CD4-positive, alpha-beta memory T cell (primary cell): ENCODE measurements at regions of chr14 and their contacts with region 1.

Region 1: DNA sequence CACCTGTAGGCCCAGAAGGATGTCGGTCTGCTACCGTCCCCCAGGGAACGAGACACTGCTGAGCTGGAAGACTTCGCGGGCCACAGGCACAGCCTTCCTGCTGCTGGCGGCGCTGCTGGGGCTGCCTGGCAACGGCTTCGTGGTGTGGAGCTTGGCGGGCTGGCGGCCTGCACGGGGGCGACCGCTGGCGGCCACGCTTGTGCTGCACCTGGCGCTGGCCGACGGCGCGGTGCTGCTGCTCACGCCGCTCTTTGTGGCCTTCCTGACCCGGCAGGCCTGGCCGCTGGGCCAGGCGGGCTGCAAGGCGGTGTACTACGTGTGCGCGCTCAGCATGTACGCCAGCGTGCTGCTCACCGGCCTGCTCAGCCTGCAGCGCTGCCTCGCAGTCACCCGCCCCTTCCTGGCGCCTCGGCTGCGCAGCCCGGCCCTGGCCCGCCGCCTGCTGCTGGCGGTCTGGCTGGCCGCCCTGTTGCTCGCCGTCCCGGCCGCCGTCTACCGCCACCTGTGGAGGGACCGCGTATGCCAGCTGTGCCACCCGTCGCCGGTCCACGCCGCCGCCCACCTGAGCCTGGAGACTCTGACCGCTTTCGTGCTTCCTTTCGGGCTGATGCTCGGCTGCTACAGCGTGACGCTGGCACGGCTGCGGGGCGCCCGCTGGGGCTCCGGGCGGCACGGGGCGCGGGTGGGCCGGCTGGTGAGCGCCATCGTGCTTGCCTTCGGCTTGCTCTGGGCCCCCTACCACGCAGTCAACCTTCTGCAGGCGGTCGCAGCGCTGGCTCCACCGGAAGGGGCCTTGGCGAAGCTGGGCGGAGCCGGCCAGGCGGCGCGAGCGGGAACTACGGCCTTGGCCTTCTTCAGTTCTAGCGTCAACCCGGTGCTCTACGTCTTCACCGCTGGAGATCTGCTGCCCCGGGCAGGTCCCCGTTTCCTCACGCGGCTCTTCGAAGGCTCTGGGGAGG is at the start of gene LTB4R:
- DNase-seq: peak; percentile 73 to 79 (median 77)
- H3K4me3 ChIP-seq: peak within 1 kb of the TSS; percentile 55 to 58
- H3K4me3 Mint-ChIP-seq: peak within 1 kb of the TSS; percentile 83 to 94 (median 88)
- H3K27ac ChIP-seq: peak within 1 kb of the TSS; percentile 72
- H3K27ac Mint-ChIP-seq: peak within 1 kb of the TSS; percentile 90 to 97 (median 95)
- H3K4me1 ChIP-seq: peaks cover 71% of the 10 kb centered on the region
- H3K4me1 Mint-ChIP-seq: peaks cover 58 to 89% (median 72%) of the 10 kb centered on the region in 4 donors
- H3K27me3 ChIP-seq: no peaks in the 10 kb centered on the region
- H3K27me3 Mint-ChIP-seq: no peaks in the 10 kb centered on the region
- total RNA-seq, gene LTB4R: 19.5 to 20.0 TPM

Region 2: GRCh38 chr14:24232121-24232644 is 78.7 kb before region 1 on chr14 and contains the start of gene NEDD8:
- CTCF ChIA-PET with region 1: interaction called, 556 read pairs
- POLR2A ChIA-PET with region 1: interaction called, 4 read pairs
- intact Hi-C with region 1: no loop called
- DNase-seq: peak; percentile 89 to 96 (median 89)
- H3K4me3 ChIP-seq: peak within 1 kb of the TSS; percentile 100
- H3K4me3 Mint-ChIP-seq: peak within 1 kb of the TSS; percentile 97 to 99 (median 98)
- H3K27ac ChIP-seq: peak within 1 kb of the TSS; percentile 88
- H3K27ac Mint-ChIP-seq: peak within 1 kb of the TSS; percentile 95 to 99 (median 97)
- H3K4me1 ChIP-seq: peaks cover 41% of the 10 kb centered on the region
- H3K4me1 Mint-ChIP-seq: peaks cover 41 to 68% (median 54%) of the 10 kb centered on the region in 4 donors
- H3K27me3 ChIP-seq: no peaks in the 10 kb centered on the region
- H3K27me3 Mint-ChIP-seq: no peaks in the 10 kb centered on the region
- total RNA-seq, gene NEDD8: 116 to 127 TPM

Region 3: GRCh38 chr14:24279301-24280186 is 31.4 kb before region 1 on chr14:
- CTCF ChIA-PET with region 1: interaction called, 20 read pairs
- POLR2A ChIA-PET with region 1: interaction called, 82 read pairs
- intact Hi-C with region 1: no loop called
- DNase-seq: peak; percentile 46 to 85 (median 51)
- H3K4me3 ChIP-seq: no peak overlapping the region
- H3K4me3 Mint-ChIP-seq: peak overlapping the region in 4 of 8 donors; percentile 43 to 67 (median 46)
- H3K27ac ChIP-seq: peak overlapping the region; percentile 37
- H3K27ac Mint-ChIP-seq: peak overlapping the region; percentile 75 to 95 (median 91)
- H3K4me1 ChIP-seq: peaks cover 23% of the 10 kb centered on the region
- H3K4me1 Mint-ChIP-seq: peaks cover 21 to 44% (median 30%) of the 10 kb centered on the region in 4 donors
- H3K27me3 ChIP-seq: no peaks in the 10 kb centered on the region
- H3K27me3 Mint-ChIP-seq: no peaks in the 10 kb centered on the region

Region 4: DNA sequence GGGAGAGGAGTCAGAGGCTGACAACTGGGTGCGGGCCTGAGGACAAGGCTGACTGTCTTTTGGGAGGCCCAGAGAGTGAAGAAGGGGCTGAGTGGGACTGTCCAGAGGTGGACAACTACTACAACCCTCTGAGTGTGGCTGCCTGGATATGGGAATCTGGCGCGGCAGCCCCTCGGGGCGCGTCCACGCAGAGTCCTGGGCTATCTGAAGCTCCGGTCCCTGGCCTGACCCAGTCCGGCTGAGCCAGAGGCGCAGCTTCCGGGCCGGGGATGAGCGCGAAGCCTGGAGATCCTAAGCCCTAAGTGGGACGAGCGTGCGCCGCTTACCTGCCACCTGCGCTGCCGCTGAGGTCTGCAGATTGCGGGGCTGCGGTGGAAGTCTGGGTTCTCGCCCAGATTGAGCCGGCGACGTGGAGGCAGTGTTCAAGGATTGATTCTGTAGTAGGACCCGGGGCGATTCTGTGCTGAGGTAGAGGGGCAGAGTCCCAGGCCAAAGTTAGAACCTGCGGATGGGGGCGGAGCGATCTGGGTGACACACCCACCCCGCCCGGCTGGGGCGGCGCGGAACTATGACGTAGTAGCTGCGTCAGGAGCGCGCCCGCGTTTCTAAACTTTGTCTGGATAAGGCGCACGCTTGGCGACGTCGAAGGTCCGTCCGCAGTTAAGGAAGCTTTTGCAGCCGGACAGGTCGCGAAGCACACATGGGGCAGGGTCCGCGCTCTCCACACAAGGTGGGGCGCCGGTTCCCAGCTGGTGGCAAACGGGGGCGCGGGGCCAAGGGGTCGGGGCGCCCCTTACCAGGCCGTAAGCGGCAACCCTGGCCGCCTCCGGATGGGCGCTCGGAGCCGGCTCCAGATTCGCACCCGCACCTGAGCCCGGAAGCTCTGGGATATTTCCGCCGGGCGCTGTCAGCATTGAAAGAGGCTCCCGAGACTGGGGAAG is 11.4 kb before region 1 on chr14 and contains the starts of genes DHRS1 and NOP9:
- CTCF ChIA-PET with region 1: interaction called, 152 read pairs
- POLR2A ChIA-PET with region 1: interaction called, 81 read pairs
- intact Hi-C with region 1: loop called (anchors 1 kb)
- DNase-seq: peak; percentile 89 to 92 (median 90)
- H3K4me3 ChIP-seq: peak within 1 kb of the TSS; percentile 77 to 85
- H3K4me3 Mint-ChIP-seq: peak within 1 kb of the TSS; percentile 91 to 99 (median 94)
- H3K27ac ChIP-seq: peak within 1 kb of the TSS; percentile 87
- H3K27ac Mint-ChIP-seq: peak within 1 kb of the TSS; percentile 96 to 99 (median 98)
- H3K4me1 ChIP-seq: peaks cover 42% of the 10 kb centered on the region
- H3K4me1 Mint-ChIP-seq: peaks cover 32 to 66% (median 51%) of the 10 kb centered on the region in 4 donors
- H3K27me3 ChIP-seq: no peaks in the 10 kb centered on the region
- H3K27me3 Mint-ChIP-seq: no peaks in the 10 kb centered on the region
- total RNA-seq, gene DHRS1: 37.6 to 38.6 TPM
- total RNA-seq, gene NOP9: 23.1 to 28.1 TPM

Region 5: DNA sequence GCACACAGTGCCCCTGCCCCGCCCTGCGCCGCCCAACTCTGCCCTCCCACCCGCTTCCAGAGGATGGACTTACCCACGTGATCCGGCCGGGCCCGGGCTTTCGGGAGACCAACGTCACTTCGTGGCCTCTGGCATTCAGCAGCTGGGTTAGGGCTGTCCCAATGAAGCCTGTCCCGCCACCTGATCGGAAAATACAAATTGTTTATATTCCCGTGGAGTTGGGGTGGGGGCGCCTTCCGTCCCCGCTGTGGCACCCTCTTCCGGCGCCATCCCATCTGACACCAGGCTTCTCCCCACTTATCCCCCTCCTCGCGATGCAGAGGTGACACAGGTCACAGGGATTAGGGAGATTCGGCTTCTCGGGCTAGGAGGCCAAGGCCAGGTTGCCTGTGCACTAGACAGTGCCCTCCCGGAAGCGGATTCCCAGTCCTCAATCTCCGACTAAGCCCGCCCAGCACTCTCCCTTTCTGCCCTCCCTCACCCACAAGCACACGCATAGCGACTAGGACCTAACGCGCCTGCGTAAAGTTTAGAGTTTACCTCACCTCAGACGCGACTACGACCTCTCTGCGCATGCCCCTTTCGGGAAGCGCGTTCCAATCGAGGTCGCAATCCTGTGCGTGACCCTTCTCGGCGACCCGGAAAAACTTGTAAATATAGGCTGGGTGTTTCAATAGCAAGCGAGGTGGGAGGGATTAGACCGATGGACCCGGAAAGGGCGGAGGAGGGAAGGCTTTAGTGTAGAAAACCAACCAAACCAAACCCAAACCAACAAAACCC is 131.5 kb after region 1 on chr14 and contains the start of gene SDR39U1:
- CTCF ChIA-PET with region 1: interaction called, 33 read pairs
- POLR2A ChIA-PET with region 1: interaction called, 26 read pairs
- intact Hi-C with region 1: no loop called
- DNase-seq: peak; percentile 95 to 99 (median 98)
- H3K4me3 ChIP-seq: peak within 1 kb of the TSS; percentile 73 to 85
- H3K4me3 Mint-ChIP-seq: peak within 1 kb of the TSS; percentile 87 to 97 (median 92)
- H3K27ac ChIP-seq: peak within 1 kb of the TSS; percentile 93
- H3K27ac Mint-ChIP-seq: peak within 1 kb of the TSS; percentile 93 to 99 (median 99)
- H3K4me1 ChIP-seq: peaks cover 27% of the 10 kb centered on the region
- H3K4me1 Mint-ChIP-seq: peaks cover 20 to 57% (median 41%) of the 10 kb centered on the region in 4 donors
- H3K27me3 ChIP-seq: no peaks in the 10 kb centered on the region
- H3K27me3 Mint-ChIP-seq: no peaks in the 10 kb centered on the region
- total RNA-seq, gene SDR39U1: 102 to 109 TPM